H1 (cell line): ENCODE measurements at regions of chr11 and their contacts with region 1.

Region 1: GRCh38 chr11:44893846-44894617 is 56.7 kb downstream of the TP53I11 start:
- DNase-seq: peak; percentile 79 to 92
- H3K4me3 ChIP-seq: no peak overlapping the region
- H3K27ac ChIP-seq: no peak overlapping the region
- H3K4me1 ChIP-seq: peaks cover 2 to 28% (median 9%) of the 10 kb centered on the region in 4 experiments
- H3K27me3 ChIP-seq: peaks cover 0 to 13% (median 3%) of the 10 kb centered on the region in 4 experiments; a peak in 3 of 7 replicates
- CTCF ChIP-seq: peak; percentile 96 to 99 (median 98)
- EP300 ChIP-seq: no peak
- POLR2A ChIP-seq: no peak
- RAD21 ChIP-seq: peak; percentile 98 to 100

Region 2: GRCh38 chr11:44737245-44738085 is 156.6 kb before region 1 on chr11:
- CTCF ChIA-PET with region 1: interaction called, 14 read pairs
- POLR2A ChIA-PET with region 1: interaction called, 4 read pairs
- DNase-seq: no peak
- H3K4me3 ChIP-seq: no peak overlapping the region
- H3K27ac ChIP-seq: no peak overlapping the region
- H3K4me1 ChIP-seq: peaks cover 11 to 35% (median 25%) of the 10 kb centered on the region in 4 experiments
- H3K27me3 ChIP-seq: peaks cover 0 to 22% (median 9%) of the 10 kb centered on the region in 4 experiments; a peak in 5 of 7 replicates
- CTCF ChIP-seq: no peak
- EP300 ChIP-seq: no peak
- POLR2A ChIP-seq: no peak
- RAD21 ChIP-seq: no peak

Region 3: GRCh38 chr11:44785856-44786606 is 108.0 kb before region 1 on chr11:
- CTCF ChIA-PET with region 1: interaction called, 13 read pairs
- POLR2A ChIA-PET with region 1: no interaction called
- DNase-seq: no peak
- H3K4me3 ChIP-seq: peak overlapping the region in 1 of 4 experiments; percentile 9; a peak in 1 of 8 replicates
- H3K27ac ChIP-seq: no peak overlapping the region
- H3K4me1 ChIP-seq: peaks cover 8 to 19% (median 19%) of the 10 kb centered on the region in 4 experiments
- H3K27me3 ChIP-seq: peaks cover 0 to 4% (median 0%) of the 10 kb centered on the region in 4 experiments; a peak in 1 of 7 replicates
- CTCF ChIP-seq: peak; percentile 51 to 62 (median 58)
- EP300 ChIP-seq: no peak
- POLR2A ChIP-seq: no peak
- RAD21 ChIP-seq: peak; percentile 24 to 54; a peak in 3 of 4 replicates

Region 4: DNA sequence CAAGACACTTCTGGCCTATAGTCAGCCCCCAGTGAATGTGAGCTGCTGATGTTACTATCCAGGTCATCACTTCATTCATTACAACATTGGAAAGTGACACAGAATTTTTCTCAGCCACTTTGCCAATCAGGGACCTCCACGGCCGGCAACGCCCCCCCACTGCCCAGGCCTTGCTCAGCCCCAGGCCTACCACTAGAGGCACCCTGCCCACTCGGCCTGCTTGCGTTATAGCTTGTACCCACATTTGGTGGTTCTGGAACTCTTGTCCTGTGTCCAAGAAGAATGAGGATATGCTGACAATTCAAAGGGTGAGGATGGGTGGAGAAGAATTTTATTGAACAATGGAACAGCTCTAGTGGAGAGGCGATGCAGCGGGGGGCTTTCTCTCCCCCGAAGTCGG is 71.0 kb before region 1 on chr11:
- CTCF ChIA-PET with region 1: interaction called, 49 read pairs
- POLR2A ChIA-PET with region 1: no interaction called
- DNase-seq: peak in 1 of 2 experiments; percentile 57
- H3K4me3 ChIP-seq: 0 out of 8 replicates have a peak overlapping the region, but pooled peaks of 1 of the 4 experiments have one; percentile 31
- H3K27ac ChIP-seq: no peak overlapping the region
- H3K4me1 ChIP-seq: peaks cover 11 to 32% (median 21%) of the 10 kb centered on the region in 4 experiments
- H3K27me3 ChIP-seq: peaks cover 0 to 25% (median 10%) of the 10 kb centered on the region in 4 experiments; a peak in 5 of 7 replicates
- CTCF ChIP-seq: peak; percentile 73 to 99 (median 93)
- EP300 ChIP-seq: no peak
- POLR2A ChIP-seq: no peak
- RAD21 ChIP-seq: peak; percentile 64 to 74

Region 5: DNA sequence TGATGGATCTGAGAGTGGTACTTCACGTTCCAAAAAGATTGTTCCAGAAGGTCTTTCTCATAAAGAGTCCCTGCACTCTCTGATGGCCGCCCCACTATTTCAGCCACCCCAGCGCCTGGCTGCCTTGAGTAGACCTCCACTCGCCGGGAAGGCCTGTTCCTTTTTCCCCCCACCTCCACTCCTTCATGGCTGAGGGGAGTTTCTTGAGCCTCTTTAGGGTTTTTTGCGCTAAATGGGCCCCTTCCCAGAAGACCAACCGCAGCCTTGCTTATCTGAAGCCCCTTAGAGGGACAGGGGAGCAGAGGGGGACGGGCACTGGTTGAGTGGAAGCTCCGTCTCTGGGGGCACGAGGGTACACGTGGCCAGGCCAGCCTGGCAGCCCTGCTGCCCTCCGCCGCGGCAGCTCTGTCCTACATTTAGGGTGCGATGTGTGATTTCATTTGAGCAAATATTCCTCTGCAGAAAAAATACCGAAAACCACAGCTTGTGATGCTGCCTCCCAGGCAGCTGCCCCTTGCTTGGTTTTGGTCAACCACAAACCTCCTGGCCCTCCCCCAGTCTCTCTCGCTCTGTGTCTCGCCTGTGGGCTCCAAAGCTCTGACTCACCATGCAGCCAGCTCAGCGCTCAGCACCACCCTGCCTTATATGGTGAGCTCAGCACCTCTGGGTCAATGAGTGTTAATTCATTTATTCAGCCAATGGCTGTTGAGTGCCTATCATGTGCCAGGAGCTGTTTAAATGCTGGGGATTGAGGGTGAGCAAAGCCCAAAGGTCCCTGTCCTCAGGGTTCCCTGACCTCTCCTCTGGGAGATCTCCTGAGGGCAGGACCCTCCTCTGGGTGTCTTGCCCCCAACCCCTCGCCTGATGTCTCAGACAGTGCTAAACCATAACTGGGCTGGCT is 31.9 kb before region 1 on chr11:
- CTCF ChIA-PET with region 1: interaction called, 11 read pairs
- POLR2A ChIA-PET with region 1: no interaction called
- DNase-seq: peak in 1 of 2 experiments; percentile 85
- H3K4me3 ChIP-seq: no peak overlapping the region; a peak in 2 of 8 replicates
- H3K27ac ChIP-seq: peak overlapping the region; percentile 59; the same call in 1 of the 2 replicates
- H3K4me1 ChIP-seq: peaks cover 33 to 55% (median 40%) of the 10 kb centered on the region in 4 experiments
- H3K27me3 ChIP-seq: no peaks in the 10 kb centered on the region
- CTCF ChIP-seq: no peak
- EP300 ChIP-seq: peak in 1 of 2 experiments; percentile 70; a peak in 1 of 3 replicates
- POLR2A ChIP-seq: peak in 1 of 2 experiments; percentile 37; a peak in 2 of 3 replicates
- RAD21 ChIP-seq: no peak

Region 6: GRCh38 chr11:44905131-44905866 is 11.3 kb after region 1 on chr11:
- CTCF ChIA-PET with region 1: interaction called, 17 read pairs
- POLR2A ChIA-PET with region 1: no interaction called
- DNase-seq: no peak
- H3K4me3 ChIP-seq: no peak overlapping the region
- H3K27ac ChIP-seq: no peak overlapping the region
- H3K4me1 ChIP-seq: peaks cover 2 to 17% (median 7%) of the 10 kb centered on the region in 4 experiments
- H3K27me3 ChIP-seq: peaks cover 0 to 3% (median 0%) of the 10 kb centered on the region in 4 experiments; a peak in 2 of 7 replicates
- CTCF ChIP-seq: no peak
- EP300 ChIP-seq: no peak
- POLR2A ChIP-seq: no peak
- RAD21 ChIP-seq: no peak

Region 7: GRCh38 chr11:44957040-44957515 is 63.0 kb after region 1 on chr11:
- CTCF ChIA-PET with region 1: no interaction called
- POLR2A ChIA-PET with region 1: no interaction called
- DNase-seq: no peak
- H3K4me3 ChIP-seq: peak overlapping the region in 2 of 4 experiments; percentile 3 to 50; a peak in 3 of 8 replicates
- H3K27ac ChIP-seq: no peak overlapping the region
- H3K4me1 ChIP-seq: peaks cover 18 to 64% (median 40%) of the 10 kb centered on the region in 4 experiments
- H3K27me3 ChIP-seq: peaks cover 0 to 2% (median 0%) of the 10 kb centered on the region in 4 experiments; a peak in 3 of 7 replicates
- CTCF ChIP-seq: no peak
- EP300 ChIP-seq: no peak
- POLR2A ChIP-seq: no peak
- RAD21 ChIP-seq: no peak